Gastrocnemius medialis (tissue), 4 donors: ENCODE measurements at regions of chr10 and their contacts with region 1.

Region 1: DNA sequence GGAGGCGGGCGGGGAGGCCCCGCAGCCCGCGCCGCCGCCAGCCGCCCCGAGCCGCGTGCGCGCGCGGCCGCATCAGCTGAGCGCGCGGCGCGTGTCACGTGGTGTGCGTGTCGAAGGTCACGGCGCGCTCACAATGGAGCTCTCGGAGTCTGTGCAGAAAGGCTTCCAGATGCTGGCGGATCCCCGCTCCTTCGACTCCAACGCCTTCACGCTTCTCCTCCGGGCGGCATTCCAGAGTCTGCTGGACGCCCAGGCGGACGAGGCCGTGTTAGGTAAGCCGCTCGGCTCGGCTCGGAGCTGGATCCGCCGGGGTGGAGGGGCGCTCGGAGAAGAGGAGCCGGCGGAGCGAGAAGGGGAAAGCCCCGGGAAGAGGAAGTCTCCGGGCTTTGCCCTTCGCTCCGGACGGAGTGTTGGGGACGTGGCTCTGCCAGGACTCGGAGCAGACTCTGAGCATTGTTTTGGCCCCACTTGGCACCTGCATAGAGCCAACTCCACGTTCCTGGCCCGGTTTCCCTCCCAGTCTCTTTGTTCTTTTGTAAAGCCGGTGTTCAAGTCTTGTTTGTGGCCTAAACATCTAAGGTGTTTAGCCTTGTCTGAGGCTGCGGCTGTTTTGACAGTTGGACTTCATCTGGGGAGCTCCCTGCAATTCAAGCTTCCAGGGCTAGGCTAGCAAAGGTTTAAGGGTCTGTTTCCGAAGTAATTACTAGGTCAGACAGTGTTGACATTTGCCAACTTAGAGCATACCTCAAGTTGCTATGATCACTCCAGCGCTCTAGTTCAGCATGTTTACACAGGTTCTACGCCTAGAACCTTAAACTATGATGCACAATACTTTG is at the start of gene COMMD3:
- DNase-seq: peak; percentile 79 to 83
- ATAC-seq: peak; percentile 80 to 82
- H3K4me3 ChIP-seq: peak within 1 kb of the TSS; percentile 79 to 96 (median 84)
- H3K27ac ChIP-seq: peak within 1 kb of the TSS; percentile 94 to 97 (median 95)
- H3K4me1 ChIP-seq: peaks cover 24 to 30% of the 10 kb centered on the region in 2 donors
- H3K27me3 ChIP-seq: no peaks in the 10 kb centered on the region
- CTCF ChIP-seq: no peak
- POLR2A ChIP-seq: peak; percentile 81 to 90
- total RNA-seq, gene COMMD3: 26.8 to 50.9 (median 37.9) TPM

Region 2: DNA sequence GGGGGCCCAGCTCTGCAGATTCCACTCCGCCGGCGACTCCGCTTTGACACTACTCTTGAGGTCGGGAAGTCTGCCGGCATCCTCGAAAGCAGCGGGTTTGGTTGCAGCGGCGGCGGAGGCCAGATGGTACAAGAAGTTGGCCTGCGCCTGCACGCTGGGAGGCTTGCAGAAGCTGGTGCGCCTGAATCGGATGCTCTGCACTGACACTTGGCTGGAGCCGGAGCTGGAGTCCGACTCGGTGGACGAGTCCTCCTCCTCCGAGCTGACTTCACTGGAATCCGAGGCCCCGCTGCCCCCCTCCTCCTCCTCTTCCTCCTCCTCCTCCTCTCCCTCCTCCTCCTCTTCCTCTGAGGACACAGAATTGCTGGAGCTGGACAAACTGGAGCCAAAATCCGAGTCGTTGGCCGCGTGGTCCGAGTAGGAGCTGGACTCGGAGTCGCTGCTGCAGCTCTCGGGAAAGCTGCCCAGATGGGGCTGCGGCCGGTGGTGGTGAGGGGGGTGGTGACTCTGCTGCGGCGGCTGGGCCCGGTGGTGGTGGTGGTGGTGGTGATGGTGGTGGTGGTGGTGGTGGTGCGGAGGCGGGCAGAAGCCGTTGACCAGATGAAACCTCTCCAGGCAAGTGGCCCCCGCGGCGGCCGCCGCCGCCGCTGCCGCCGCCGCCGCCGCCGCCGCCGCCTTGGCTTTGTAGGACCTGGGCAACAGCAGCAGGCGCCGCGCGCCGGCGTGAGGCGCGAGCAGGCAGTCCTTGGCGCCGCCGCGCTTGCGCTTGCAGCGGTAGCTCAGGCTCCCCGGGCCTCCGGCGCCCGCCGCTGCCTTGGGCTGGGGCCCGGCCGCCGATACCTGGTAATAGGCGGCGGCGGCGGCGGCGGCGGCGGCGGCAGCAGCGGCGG is 800.0 kb before region 1 on chr10:
- in situ Hi-C with region 1: loop called in 3 of 4 experiments (anchors 10 to 25 kb)
- intact Hi-C with region 1: no loop called
- DNase-seq: peak; percentile 82 to 86
- ATAC-seq: peak; percentile 61 to 64
- H3K4me3 ChIP-seq: peak overlapping the region; percentile 63 to 72 (median 67)
- H3K27ac ChIP-seq: peak overlapping the region; percentile 68 to 98 (median 77)
- H3K4me1 ChIP-seq: peaks cover 33 to 34% of the 10 kb centered on the region in 2 donors
- H3K27me3 ChIP-seq: peaks cover 0 to 8% (median 4%) of the 10 kb centered on the region in 3 donors
- CTCF ChIP-seq: no peak
- POLR2A ChIP-seq: peak in 1 of 2 donors; percentile 23

Region 3: DNA sequence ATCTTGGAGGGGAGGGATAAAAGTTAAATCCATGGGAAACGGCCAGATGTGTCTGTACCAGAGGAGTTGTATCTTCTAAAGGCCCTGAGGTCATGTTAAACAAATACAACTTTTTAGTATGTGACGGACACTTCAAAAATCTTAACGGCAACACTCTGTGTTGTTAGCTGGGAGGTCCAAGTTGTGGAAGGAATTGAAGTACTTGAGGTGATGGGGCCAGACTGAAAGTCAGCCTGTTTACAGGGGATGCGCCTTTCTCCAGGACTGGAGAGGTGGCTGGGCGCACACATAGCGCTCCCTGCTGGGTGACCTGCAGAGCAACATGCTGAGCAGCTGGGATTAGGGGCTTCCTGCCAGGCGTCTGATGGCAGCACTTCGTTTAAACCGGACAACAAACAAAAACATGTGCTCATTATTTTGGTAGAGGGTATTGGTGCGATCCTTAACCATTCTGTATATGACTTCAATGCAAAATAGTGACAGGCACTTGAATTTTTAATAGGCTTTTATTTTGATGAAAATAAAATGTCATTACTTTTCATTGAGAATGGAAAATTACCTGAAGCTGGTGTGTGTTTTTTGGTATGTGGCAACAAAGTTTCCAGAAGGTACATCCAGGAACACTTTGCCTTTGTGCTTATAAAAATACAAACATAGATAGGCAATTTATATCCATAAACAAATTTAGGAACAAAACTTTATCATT is 584.3 kb before region 1 on chr10:
- in situ Hi-C with region 1: no loop called
- intact Hi-C with region 1: loop called (anchors 10 kb)
- DNase-seq: peak; percentile 38 to 61
- ATAC-seq: peak; percentile 86
- H3K4me3 ChIP-seq: no peak overlapping the region
- H3K27ac ChIP-seq: no peak overlapping the region
- H3K4me1 ChIP-seq: no peaks in the 10 kb centered on the region
- H3K27me3 ChIP-seq: no peaks in the 10 kb centered on the region
- CTCF ChIP-seq: peak; percentile 66 to 90 (median 82)
- POLR2A ChIP-seq: no peak

Region 4: DNA sequence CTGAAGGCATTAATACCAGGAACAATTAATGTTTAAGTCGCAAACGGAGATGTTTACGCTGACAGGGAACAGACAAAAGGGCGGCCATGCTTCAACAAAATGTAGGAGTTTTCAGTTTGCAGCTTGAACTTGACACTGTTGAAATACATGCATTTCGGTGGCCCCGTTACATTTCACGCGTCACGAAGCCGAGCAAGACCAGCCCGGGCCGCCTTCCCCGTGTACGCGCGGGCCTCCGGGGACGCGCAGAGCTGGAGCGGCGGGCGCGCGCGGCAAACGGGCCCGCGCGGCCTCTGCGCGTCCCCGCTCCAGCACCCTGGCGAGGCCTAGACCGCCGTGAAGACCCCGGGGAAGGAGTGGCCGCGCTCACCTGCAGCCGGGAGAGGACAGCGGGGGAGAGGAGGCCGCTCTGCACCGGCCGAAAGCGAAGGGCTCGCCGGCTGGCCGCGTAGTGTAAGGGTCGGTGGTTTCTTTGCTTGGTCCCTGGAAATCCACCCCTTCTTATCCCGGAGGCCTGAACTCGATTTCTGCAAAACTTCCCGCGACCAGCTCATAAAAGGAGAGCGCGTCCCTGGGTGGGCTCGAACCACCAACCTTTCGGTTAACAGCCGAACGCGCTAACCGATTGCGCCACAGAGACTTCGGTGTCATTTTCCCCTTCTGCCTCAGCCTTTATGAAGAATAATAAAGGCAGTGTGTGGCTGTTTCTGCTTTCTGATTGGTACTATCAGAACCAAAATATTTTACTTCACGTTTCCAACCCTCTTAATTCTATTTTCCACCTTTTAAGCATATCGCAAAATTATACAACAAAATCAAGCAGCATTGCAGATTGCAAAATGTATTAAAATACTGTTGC is 87.3 kb before region 1 on chr10:
- in situ Hi-C with region 1: loop called in 1 of 4 experiments (anchors 10 kb)
- intact Hi-C with region 1: loop called (anchors 1 kb)
- DNase-seq: peak; percentile 71 to 77
- ATAC-seq: peak; percentile 91 to 92
- H3K4me3 ChIP-seq: peak overlapping the region; percentile 72 to 92 (median 82)
- H3K27ac ChIP-seq: peak overlapping the region; percentile 83 to 95 (median 90)
- H3K4me1 ChIP-seq: peaks cover 3 to 7% of the 10 kb centered on the region in 2 donors
- H3K27me3 ChIP-seq: no peaks in the 10 kb centered on the region
- CTCF ChIP-seq: no peak
- POLR2A ChIP-seq: peak in 1 of 2 donors; percentile 14

Region 5: GRCh38 chr10:22436884-22437619 is 120.5 kb after region 1 on chr10:
- in situ Hi-C with region 1: no loop called
- intact Hi-C with region 1: loop called (anchors 5 kb)
- DNase-seq: peak; percentile 69 to 86
- ATAC-seq: peak; percentile 79 to 89
- H3K4me3 ChIP-seq: peak overlapping the region; percentile 70 to 95 (median 78)
- H3K27ac ChIP-seq: peak overlapping the region; percentile 86 to 95 (median 86)
- H3K4me1 ChIP-seq: peaks cover 12 to 19% of the 10 kb centered on the region in 2 donors
- H3K27me3 ChIP-seq: no peaks in the 10 kb centered on the region
- CTCF ChIP-seq: no peak
- POLR2A ChIP-seq: peak; percentile 71 to 76

Region 6: GRCh38 chr10:22805283-22805682 is 488.8 kb after region 1 on chr10:
- in situ Hi-C with region 1: no loop called
- intact Hi-C with region 1: no loop called
- DNase-seq: no peak
- ATAC-seq: no peak
- H3K4me3 ChIP-seq: no peak overlapping the region
- H3K27ac ChIP-seq: no peak overlapping the region
- H3K4me1 ChIP-seq: peaks cover 0 to 7% of the 10 kb centered on the region in 2 donors
- H3K27me3 ChIP-seq: no peaks in the 10 kb centered on the region
- CTCF ChIP-seq: no peak
- POLR2A ChIP-seq: no peak

Region 7: DNA sequence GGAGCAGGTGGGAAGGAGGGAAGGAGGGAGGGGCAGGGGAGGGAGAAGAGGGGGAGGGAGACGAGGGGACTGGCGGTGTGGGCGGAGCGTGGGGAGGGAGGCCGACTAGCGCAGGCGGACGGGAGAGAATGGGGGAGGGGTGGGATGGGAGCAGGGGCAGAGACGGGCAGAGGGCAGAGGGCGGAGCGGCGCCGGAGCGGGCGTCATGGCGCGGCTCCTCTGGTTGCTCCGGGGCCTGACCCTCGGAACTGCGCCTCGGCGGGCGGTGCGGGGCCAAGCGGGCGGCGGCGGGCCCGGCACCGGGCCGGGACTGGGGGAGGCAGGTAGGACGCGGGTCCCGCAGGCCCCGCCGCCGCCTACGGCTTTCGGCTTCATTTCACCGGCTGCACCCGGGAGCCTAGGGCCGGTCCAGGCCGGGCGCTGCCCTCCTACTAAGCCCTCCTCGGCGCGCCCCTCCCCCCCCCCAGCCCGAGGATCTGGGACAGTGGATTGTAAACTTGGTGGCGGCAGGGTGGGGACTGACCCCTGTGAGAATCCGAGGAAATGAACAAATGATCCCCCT is 779.0 kb after region 1 on chr10 and contains the start of gene MSRB2:
- in situ Hi-C with region 1: loop called in 1 of 4 experiments (anchors 10 kb)
- intact Hi-C with region 1: loop called (anchors 2 kb)
- DNase-seq: peak; percentile 92 to 96
- ATAC-seq: peak; percentile 95 to 96
- H3K4me3 ChIP-seq: peak within 1 kb of the TSS; percentile 76 to 89 (median 81)
- H3K27ac ChIP-seq: peak within 1 kb of the TSS; percentile 81 to 95 (median 92)
- H3K4me1 ChIP-seq: peaks cover 29 to 33% of the 10 kb centered on the region in 2 donors
- H3K27me3 ChIP-seq: no peaks in the 10 kb centered on the region
- CTCF ChIP-seq: no peak
- POLR2A ChIP-seq: peak; percentile 90 to 92
- total RNA-seq, gene MSRB2: 24.3 to 43.5 (median 29.4) TPM